AG04449 (cell line): ENCODE measurements at regions of chr5 and their contacts with region 1.

Region 1: DNA sequence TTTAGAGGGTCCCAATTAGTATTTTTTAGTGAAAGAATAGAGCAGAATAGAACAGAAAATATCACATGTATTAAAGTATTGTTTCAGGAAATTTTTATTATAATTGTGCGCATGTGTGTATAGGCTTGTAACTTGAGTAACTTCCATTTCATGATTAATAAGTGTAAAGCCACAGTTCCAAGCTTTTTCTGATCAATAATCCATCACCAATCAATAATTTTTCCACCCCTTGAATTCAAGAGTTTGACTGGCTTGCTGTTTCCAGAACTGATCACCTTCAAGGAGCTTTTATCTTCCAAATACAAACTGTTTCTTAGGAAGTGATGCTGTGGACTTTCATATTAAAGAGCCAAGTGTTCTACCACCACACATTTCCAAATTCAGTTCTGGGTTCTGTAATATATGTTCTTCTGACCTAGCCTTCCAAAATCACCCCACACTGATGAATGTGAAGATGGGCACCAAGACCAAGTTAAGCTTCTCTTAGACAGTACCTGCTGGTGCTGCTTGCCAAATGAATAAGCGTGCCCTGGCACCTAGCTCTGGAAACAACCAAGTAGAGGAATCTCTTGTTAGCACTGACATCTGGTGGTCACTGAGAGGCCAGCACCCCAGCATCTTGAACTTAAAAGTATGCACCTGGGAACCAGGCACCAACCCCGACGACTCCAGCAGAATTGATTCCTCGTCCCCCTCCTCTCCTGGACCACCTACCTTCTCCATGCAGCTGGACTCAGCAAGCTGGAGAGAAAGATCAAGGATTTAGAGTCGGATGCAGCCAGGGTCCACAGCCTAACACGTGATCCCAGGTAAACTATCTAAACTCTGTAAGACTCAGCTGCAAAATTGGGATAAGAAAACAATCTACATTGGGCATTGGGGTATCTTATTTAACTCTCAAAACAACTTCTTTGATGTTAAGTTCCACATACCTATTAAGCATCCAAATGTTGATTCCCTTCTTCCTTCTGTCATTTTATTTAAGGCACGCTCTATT is 89.6 kb downstream of the SLC1A3 start:
- DNase-seq: no peak
- H3K4me3 ChIP-seq: no peak overlapping the region
- CTCF ChIP-seq: peak; percentile 70

Region 2: GRCh38 chr5:36305571-36306326 is 390.2 kb before region 1 on chr5:
- CTCF ChIA-PET with region 1: interaction called, 12 read pairs
- POLR2A ChIA-PET with region 1: no interaction called
- DNase-seq: no peak
- H3K4me3 ChIP-seq: no peak overlapping the region
- CTCF ChIP-seq: peak; percentile 59

Region 3: GRCh38 chr5:36389245-36389644 is 306.7 kb before region 1 on chr5:
- CTCF ChIA-PET with region 1: interaction called, 12 read pairs
- POLR2A ChIA-PET with region 1: no interaction called
- DNase-seq: no peak
- H3K4me3 ChIP-seq: no peak overlapping the region
- CTCF ChIP-seq: no peak

Region 4: GRCh38 chr5:36442352-36442751 is 253.6 kb before region 1 on chr5:
- CTCF ChIA-PET with region 1: interaction called, 10 read pairs
- POLR2A ChIA-PET with region 1: no interaction called
- DNase-seq: no peak
- H3K4me3 ChIP-seq: no peak overlapping the region
- CTCF ChIP-seq: no peak

Region 5: DNA sequence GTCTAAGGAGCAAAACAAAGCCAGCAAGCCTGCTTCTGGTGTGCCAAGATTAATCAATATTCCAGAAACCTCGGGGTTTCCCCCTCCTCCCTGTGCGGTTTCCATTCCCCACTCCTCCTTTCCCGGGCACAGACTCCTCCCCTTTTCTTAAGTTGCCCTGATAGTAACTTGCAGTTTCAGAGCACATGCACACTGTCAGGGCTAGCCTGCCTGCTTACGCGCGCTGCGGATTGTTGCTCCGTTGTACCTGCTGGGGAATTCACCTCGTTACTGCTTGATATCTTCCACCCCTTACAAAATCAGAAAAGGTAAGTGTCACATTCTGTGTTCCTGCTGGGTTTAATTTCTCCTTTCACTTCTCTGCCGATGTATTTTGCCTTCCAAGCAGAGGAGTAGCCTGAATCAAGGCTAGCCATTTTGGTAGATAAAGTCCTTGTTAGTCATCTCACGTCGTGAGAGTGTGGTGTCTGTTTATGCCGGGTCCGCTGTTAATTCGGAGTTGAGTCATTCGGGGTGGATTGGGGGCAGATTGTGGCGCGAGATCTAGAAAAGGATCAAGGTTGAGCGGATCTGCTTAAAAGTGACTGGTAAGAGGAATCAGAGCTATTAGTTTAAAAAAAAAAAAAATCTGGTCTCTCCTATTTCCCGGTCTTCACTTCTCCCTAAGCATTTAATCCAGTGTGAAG is 89.4 kb before region 1 on chr5 and contains the start of gene SLC1A3:
- CTCF ChIA-PET with region 1: interaction called, 11 read pairs
- POLR2A ChIA-PET with region 1: no interaction called
- DNase-seq: no peak
- H3K4me3 ChIP-seq: peak within 1 kb of the TSS; percentile 66
- CTCF ChIP-seq: no peak

Region 6: DNA sequence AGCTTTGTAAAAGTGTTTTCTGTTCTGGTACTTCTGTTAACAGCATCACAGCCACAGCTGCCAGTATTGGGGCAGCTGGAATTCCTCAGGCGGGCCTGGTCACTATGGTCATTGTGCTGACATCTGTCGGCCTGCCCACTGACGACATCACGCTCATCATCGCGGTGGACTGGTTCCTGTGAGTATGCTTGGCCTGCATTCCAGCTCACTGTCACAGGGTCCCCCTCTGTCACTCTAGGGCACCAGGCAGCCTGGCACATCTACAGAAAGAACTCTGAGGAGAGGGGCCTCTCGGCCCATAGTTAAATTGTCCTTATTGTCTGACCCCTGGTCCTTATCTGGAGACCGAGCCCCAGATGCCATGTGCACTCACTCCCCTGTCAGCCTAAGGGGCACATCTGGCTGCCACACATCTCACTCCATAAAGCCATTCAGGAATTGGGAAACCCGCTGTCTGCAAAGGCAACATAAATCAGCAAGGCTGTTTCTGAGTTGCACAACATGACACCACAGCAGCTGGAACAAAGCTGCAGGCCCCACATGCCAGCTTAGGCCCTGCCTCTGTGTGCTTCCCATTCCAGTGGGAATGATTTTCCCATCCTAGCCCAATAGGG is 12.0 kb before region 1 on chr5:
- CTCF ChIA-PET with region 1: interaction called, 27 read pairs
- POLR2A ChIA-PET with region 1: no interaction called
- DNase-seq: no peak
- H3K4me3 ChIP-seq: no peak overlapping the region
- CTCF ChIP-seq: no peak